T-cell (primary cell): ENCODE measurements at regions of chr20 and their contacts with region 1.

Region 1: DNA sequence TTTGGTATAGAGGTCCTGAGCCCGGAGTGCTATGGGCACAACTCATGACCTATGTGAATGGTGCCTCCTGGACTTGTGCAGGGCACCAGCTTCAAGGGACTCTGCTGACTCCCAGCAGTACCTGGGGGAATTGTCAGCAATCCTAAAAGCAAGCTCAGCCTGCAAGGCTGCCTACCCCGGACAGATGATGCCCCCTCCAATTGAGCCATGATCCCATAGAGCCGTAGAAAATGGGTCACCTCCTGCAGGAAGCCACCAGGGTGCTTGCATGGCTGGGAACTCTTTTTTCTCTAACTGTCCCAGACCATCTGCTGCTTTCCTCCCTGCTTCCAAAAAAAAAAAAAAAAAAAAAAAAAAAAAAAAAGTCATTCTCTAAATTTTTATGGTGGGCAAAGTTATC is 12.9 kb upstream of the PRND start:
- DNase-seq: no peak
- ATAC-seq: no peak
- H3K4me3 ChIP-seq: no peak overlapping the region
- H3K4me3 Mint-ChIP-seq: no peak overlapping the region
- H3K27ac ChIP-seq: no peak overlapping the region
- H3K27ac Mint-ChIP-seq: no peak overlapping the region
- H3K4me1 ChIP-seq: no peaks in the 10 kb centered on the region
- H3K4me1 Mint-ChIP-seq: peaks cover 0 to 5% (median 4%) of the 10 kb centered on the region in 3 donors
- H3K27me3 ChIP-seq: peaks cover 0 to 7% of the 10 kb centered on the region in 2 experiments
- H3K27me3 Mint-ChIP-seq: peaks cover 0 to 5% of the 10 kb centered on the region in 2 donors

Region 2: GRCh38 chr20:4726710-4727397 is 18.0 kb after region 1 on chr20:
- CTCF ChIA-PET with region 1: interaction called, 3 to 13 read pairs
- POLR2A ChIA-PET with region 1: no interaction called
- DNase-seq: peak in 31 of 35 experiments; percentile 11 to 63 (median 39)
- ATAC-seq: peak; percentile 65 to 93 (median 73)
- H3K4me3 ChIP-seq: no peak overlapping the region
- H3K4me3 Mint-ChIP-seq: peak overlapping the region; percentile 58 to 62 (median 61)
- H3K27ac ChIP-seq: peak overlapping the region; percentile 53
- H3K27ac Mint-ChIP-seq: peak overlapping the region; percentile 76 to 85
- H3K4me1 ChIP-seq: peaks cover 0 to 9% of the 10 kb centered on the region in 2 experiments
- H3K4me1 Mint-ChIP-seq: peaks cover 11 to 18% (median 17%) of the 10 kb centered on the region in 3 donors
- H3K27me3 ChIP-seq: peaks cover 0 to 19% of the 10 kb centered on the region in 2 experiments
- H3K27me3 Mint-ChIP-seq: peaks cover 0 to 2% of the 10 kb centered on the region in 2 donors

Region 3: DNA sequence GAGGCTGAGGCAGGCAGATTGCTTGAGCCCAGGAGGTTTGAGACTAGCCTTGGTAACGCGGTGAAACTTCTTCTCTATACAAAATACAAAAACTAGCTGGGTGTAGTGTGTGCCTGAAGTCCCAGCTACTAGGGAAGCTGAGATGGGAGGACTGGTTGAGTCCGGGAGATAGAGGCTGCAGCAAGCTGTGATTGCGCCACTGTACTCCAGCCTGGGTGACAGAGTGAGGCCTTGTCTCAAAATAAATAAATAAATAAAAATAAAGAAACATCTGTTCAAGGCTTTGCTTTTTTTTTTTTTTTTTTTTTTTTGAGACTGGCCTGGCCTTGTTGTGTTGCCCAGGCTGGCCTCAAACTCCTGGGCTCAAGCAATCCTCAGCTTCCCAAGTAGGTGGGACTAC is 316.1 kb after region 1 on chr20:
- CTCF ChIA-PET with region 1: no interaction called
- POLR2A ChIA-PET with region 1: no interaction called
- DNase-seq: no peak
- ATAC-seq: no peak
- H3K4me3 ChIP-seq: no peak overlapping the region
- H3K4me3 Mint-ChIP-seq: no peak overlapping the region
- H3K27ac ChIP-seq: no peak overlapping the region
- H3K27ac Mint-ChIP-seq: no peak overlapping the region
- H3K4me1 ChIP-seq: no peaks in the 10 kb centered on the region
- H3K4me1 Mint-ChIP-seq: no peaks in the 10 kb centered on the region
- H3K27me3 ChIP-seq: no peaks in the 10 kb centered on the region
- H3K27me3 Mint-ChIP-seq: no peaks in the 10 kb centered on the region